Gastrocnemius medialis (tissue), 4 donors: ENCODE measurements at regions of chr1 and their contacts with region 1.

Region 1: GRCh38 chr1:13775459-13775858 is 75.5 kb downstream of the PRDM2 start:
- DNase-seq: no peak
- ATAC-seq: no peak
- H3K4me3 ChIP-seq: no peak overlapping the region
- H3K27ac ChIP-seq: no peak overlapping the region
- H3K4me1 ChIP-seq: peaks cover 11 to 15% of the 10 kb centered on the region in 2 donors
- H3K27me3 ChIP-seq: no peaks in the 10 kb centered on the region
- CTCF ChIP-seq: no peak
- POLR2A ChIP-seq: no peak

Region 2: GRCh38 chr1:13760921-13761320 is 14.5 kb before region 1 on chr1:
- in situ Hi-C with region 1: no loop called
- intact Hi-C with region 1: loop called (anchors 1 kb)
- DNase-seq: no peak
- ATAC-seq: no peak
- H3K4me3 ChIP-seq: no peak overlapping the region
- H3K27ac ChIP-seq: peak overlapping the region in 1 of 4 donors; percentile 2
- H3K4me1 ChIP-seq: peaks cover 88 to 89% of the 10 kb centered on the region in 2 donors
- H3K27me3 ChIP-seq: no peaks in the 10 kb centered on the region
- CTCF ChIP-seq: no peak
- POLR2A ChIP-seq: no peak

Region 3: GRCh38 chr1:13792419-13792818 is 17.0 kb after region 1 on chr1:
- in situ Hi-C with region 1: no loop called
- intact Hi-C with region 1: loop called (anchors 2 kb)
- DNase-seq: peak in 1 of 2 donors; percentile 24
- ATAC-seq: peak; percentile 87 to 94
- H3K4me3 ChIP-seq: no peak overlapping the region
- H3K27ac ChIP-seq: peak overlapping the region; percentile 78 to 90 (median 88)
- H3K4me1 ChIP-seq: peaks cover 66 to 75% of the 10 kb centered on the region in 2 donors
- H3K27me3 ChIP-seq: no peaks in the 10 kb centered on the region
- CTCF ChIP-seq: no peak
- POLR2A ChIP-seq: no peak